ENCODE measurements at regions of chr17 and their contacts with region 1.

Region 1: DNA sequence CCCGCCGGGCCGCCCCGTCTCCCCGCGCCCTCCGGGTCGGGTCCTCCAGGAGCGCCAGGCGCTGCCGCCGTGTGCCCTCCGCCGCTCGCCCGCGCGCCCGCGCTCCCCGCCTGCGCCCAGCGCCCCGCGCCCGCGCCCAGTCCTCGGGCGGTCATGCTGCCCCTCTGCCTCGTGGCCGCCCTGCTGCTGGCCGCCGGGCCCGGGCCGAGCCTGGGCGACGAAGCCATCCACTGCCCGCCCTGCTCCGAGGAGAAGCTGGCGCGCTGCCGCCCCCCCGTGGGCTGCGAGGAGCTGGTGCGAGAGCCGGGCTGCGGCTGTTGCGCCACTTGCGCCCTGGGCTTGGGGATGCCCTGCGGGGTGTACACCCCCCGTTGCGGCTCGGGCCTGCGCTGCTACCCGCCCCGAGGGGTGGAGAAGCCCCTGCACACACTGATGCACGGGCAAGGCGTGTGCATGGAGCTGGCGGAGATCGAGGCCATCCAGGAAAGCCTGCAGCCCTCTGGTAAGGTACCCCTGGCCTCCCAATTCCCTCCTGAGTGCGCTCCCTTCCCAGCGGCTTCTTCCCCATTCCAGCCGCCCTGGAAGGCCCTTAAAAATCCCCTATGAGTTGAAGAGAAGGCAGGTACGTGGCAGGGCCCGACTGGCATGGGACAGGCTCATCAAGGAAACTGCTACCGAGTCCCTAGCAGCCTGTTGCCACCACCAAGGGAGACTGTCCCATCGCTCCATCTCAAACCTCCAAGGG is 505 bp downstream of the IGFBP4 start:
- DNase-seq: peak; percentile 79
- ATAC-seq: peak; percentile 32
- H3K4me3 Mint-ChIP-seq: peak overlapping the region; percentile 83
- H3K27ac Mint-ChIP-seq: no peak overlapping the region
- H3K4me1 Mint-ChIP-seq: peaks cover 44% of the 10 kb centered on the region
- H3K27me3 Mint-ChIP-seq: peaks cover 12% of the 10 kb centered on the region
- CTCF ChIP-seq: no peak

Region 2: GRCh38 chr17:40417609-40418427 is 25.9 kb before region 1 on chr17 and contains the start of gene TOP2A:
- CTCF ChIA-PET with region 1: interaction called, 19 read pairs
- POLR2A ChIA-PET with region 1: interaction called, 4 read pairs
- DNase-seq: peak; percentile 97
- ATAC-seq: peak; percentile 95
- H3K4me3 Mint-ChIP-seq: peak within 1 kb of the TSS; percentile 97
- H3K27ac Mint-ChIP-seq: peak within 1 kb of the TSS; percentile 84
- H3K4me1 Mint-ChIP-seq: peaks cover 49% of the 10 kb centered on the region
- H3K27me3 Mint-ChIP-seq: no peaks in the 10 kb centered on the region; the same call in 1 of the 2 replicates
- CTCF ChIP-seq: no peak
- total RNA-seq, gene TOP2A: 273 to 307 TPM (median 292 TPM) in 3 replicates

Region 3: DNA sequence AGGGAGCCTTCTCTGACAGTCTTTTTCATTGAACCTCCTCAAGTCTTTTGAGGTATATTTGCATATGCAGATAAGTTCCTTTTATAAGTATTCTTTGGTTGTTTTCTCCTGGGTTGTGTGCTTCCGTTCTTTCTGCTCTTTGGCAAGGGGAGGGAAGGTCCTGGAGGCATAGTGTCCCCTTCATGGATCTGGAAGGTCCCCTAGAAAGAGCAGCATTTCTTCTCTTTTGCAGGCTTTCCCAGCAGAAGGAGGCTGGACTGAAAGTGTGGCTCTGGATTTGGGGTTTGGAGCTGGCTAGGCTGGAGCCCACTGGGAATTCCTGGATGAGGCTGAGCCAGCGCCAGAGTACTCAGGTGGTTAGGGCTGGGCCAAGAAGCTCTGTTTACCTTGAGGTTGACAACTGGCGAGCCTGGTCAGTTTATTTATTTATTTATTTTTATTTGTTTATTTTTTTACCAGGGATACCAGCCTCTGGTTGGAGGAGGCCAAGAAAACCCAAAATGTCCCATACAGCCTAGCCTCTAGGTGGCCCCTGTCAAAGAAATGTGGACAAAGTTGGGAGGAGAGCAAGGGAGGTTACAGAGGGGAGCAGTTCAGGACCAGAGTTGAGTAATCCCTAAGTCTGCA is 20.7 kb before region 1 on chr17:
- CTCF ChIA-PET with region 1: interaction called, 19 read pairs
- POLR2A ChIA-PET with region 1: interaction called, 4 read pairs
- DNase-seq: peak; percentile 67
- ATAC-seq: peak; percentile 80
- H3K4me3 Mint-ChIP-seq: peak overlapping the region; percentile 51
- H3K27ac Mint-ChIP-seq: peak overlapping the region; percentile 91
- H3K4me1 Mint-ChIP-seq: peaks cover 49% of the 10 kb centered on the region
- H3K27me3 Mint-ChIP-seq: no peaks in the 10 kb centered on the region; the same call in 1 of the 2 replicates
- CTCF ChIP-seq: no peak

Region 4: DNA sequence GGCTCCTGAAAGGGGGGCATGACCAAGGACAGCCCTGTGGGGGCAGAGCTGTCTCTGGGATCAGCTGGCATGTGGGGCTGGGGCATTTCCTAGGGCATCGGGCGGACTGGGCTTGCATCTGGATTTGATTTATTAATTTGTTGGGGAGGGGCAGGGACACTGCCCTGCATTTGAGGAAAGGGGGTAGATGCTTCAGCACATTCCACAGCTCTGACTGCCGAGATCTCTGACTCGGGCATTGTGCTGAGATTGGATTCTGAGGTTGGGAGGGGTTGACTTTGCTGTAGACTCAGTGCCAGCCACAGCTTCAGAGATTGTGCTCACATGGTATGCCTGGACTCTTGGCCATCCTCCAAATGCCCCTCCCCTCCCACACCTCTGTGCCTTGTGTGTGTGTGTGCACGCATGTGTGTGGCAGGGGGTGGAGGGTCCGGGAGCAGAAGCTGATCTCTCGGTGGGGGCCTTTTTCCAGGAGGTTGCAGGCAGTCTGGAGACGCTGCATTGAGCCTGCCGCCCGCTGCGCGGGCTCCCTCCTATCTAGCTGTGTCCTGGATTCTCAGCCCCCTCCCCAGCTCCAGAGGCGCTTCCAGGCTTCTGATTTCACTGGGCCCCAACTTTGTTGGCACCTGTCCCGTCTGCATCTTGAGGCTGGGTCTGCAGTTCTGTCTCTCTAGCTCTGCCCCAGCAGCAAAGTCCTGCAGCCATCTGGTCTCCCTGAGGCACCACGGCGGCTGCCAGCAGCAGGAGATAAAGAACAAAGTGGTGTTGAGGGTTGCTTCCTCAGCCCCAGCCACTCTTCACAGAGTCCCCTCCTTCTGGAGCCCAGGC is 14.4 kb after region 1 on chr17:
- CTCF ChIA-PET with region 1: interaction called, 18 read pairs
- POLR2A ChIA-PET with region 1: interaction called, 4 read pairs
- DNase-seq: no peak
- ATAC-seq: peak; percentile 15; the same call in 1 of the 2 replicates
- H3K4me3 Mint-ChIP-seq: no peak overlapping the region
- H3K27ac Mint-ChIP-seq: 0 out of 2 replicates have a peak overlapping the region, but pooled peaks have one; percentile 76
- H3K4me1 Mint-ChIP-seq: peaks cover 60% of the 10 kb centered on the region
- H3K27me3 Mint-ChIP-seq: no peaks in the 10 kb centered on the region
- CTCF ChIP-seq: no peak

Region 5: DNA sequence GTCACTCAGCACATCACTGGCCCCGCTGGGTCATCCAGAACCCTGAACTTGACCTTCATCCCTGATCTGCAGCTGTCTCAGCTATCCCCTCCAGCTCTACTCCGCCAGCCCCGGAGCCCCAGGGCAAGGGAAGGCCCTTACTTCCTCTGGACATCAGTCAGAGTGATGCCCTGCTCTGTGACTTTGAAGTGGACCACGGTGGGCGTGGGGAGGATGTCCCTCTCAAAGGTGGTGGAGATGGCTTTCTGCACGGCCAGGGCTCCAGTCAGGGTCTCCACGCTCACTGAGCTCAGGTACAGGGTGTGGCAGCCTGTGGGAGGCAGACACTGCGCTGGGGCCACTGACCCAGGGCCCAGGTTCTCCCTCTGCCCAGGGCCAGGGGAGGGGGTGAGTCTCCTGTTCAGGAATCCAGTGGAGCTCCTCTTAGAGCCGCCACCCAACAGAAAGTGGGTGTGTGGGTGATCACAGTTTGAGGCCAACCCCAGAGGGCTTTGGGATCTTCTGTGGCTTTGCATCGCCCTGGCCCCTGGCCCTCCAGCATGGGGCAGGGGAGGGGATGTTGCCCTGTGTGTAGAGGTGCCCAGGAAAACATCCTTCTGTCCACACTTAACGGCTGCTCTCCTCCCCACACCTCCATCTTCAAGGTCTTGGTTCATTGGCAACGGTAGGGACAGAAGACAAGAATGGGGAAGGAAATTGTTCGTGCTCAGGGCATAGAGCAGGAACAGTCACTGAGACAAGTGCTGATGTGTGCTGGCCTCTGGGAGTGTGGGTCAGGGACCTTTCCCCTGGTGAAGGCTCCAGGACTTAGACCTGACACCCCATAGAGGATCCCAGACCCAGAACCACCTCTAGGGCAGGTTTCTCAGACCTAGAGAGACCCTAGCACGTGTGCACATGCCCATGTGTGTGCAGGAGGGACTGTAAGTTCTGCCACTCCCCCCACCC is 36.1 kb after region 1 on chr17:
- CTCF ChIA-PET with region 1: interaction called, 293 read pairs
- POLR2A ChIA-PET with region 1: interaction called, 3 read pairs
- DNase-seq: no peak
- ATAC-seq: no peak
- H3K4me3 Mint-ChIP-seq: no peak overlapping the region
- H3K27ac Mint-ChIP-seq: no peak overlapping the region
- H3K4me1 Mint-ChIP-seq: peaks cover 52% of the 10 kb centered on the region
- H3K27me3 Mint-ChIP-seq: no peaks in the 10 kb centered on the region; the same call in 1 of the 2 replicates
- CTCF ChIP-seq: no peak

Region 6: GRCh38 chr17:40536295-40537171 is 92.8 kb after region 1 on chr17:
- CTCF ChIA-PET with region 1: interaction called, 124 read pairs
- POLR2A ChIA-PET with region 1: no interaction called
- DNase-seq: no peak
- ATAC-seq: no peak
- H3K4me3 Mint-ChIP-seq: no peak overlapping the region
- H3K27ac Mint-ChIP-seq: no peak overlapping the region
- H3K4me1 Mint-ChIP-seq: peaks cover 14% of the 10 kb centered on the region
- H3K27me3 Mint-ChIP-seq: no peaks in the 10 kb centered on the region; the same call in 1 of the 2 replicates
- CTCF ChIP-seq: no peak

Region 7: GRCh38 chr17:40559954-40560591 is 116.3 kb after region 1 on chr17:
- CTCF ChIA-PET with region 1: interaction called, 10 read pairs
- POLR2A ChIA-PET with region 1: no interaction called
- DNase-seq: peak; percentile 93
- ATAC-seq: peak; percentile 83
- H3K4me3 Mint-ChIP-seq: no peak overlapping the region
- H3K27ac Mint-ChIP-seq: no peak overlapping the region
- H3K4me1 Mint-ChIP-seq: peaks cover 42% of the 10 kb centered on the region
- H3K27me3 Mint-ChIP-seq: peaks cover 5% of the 10 kb centered on the region
- CTCF ChIP-seq: peak; percentile 96

Measured in WTC11 (cell line).